CD8-positive, alpha-beta T cell (primary cell): ENCODE measurements at regions of chr7 and their contacts with region 1.

Region 1: DNA sequence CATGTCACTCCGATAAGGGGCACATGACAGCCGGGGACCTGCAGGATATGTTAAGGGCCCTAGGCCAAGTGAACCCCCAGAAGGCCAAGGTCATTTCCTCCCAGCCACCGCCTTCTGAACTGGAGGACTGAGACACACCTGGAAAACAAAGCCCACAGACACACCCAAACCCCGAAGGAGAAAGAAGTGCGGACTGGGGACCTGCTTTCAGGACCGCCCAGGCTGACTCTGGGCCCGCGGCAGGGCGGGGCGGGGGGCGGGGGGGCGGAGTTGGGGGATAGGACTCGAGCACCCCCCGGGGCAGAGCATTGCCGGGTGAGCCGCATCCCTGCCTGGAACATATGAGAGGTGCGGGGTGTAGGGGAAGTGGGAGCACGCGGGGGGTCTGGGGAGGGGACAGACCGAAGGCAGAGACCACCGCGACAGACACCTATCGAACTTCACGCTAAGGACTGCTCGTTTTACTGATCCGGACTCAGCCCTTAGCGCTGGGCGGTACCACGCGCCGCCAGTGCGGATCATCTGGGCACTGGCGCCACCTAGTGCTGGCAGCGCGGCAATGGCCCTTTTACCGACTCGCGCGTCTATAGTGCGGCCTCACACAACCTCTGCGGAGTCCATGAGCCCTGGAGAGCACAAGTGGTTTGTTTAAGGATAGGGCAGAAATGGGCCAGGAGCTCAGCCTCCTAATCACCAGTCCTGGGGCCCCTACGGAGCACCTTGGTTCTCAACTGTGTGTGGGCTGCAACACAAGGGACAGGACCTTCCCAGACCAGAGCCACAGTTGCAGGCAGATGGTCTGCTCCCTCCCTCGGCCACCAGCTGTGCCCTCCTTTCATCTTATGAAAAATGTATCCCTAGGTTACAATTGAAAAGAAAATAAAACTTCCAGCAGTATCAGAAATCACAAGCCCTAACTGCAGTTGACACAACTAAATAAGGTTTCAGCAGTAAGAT is 157.6 kb downstream of the HERPUD2 start:
- DNase-seq: peak; percentile 63 to 87 (median 79)
- ATAC-seq: peak; percentile 98
- H3K4me3 ChIP-seq: peak overlapping the region; percentile 35 to 36
- H3K4me3 Mint-ChIP-seq: peak overlapping the region; percentile 87
- H3K27ac ChIP-seq: no peak overlapping the region
- H3K27ac Mint-ChIP-seq: no peak overlapping the region
- H3K4me1 ChIP-seq: no peaks in the 10 kb centered on the region
- H3K4me1 Mint-ChIP-seq: peaks cover 2% of the 10 kb centered on the region
- H3K27me3 ChIP-seq: no peaks in the 10 kb centered on the region
- H3K27me3 Mint-ChIP-seq: peaks cover 12% of the 10 kb centered on the region
- CTCF ChIP-seq: peak; percentile 94

Region 2: GRCh38 chr7:34091323-34091917 is 1445.9 kb before region 1 on chr7:
- CTCF ChIA-PET with region 1: no interaction called
- POLR2A ChIA-PET with region 1: no interaction called
- intact Hi-C with region 1: loop called in 1 of 2 experiments (anchors 2 kb)
- DNase-seq: peak in 2 of 9 experiments; percentile 6 to 7
- ATAC-seq: no peak
- H3K4me3 ChIP-seq: no peak overlapping the region
- H3K4me3 Mint-ChIP-seq: no peak overlapping the region
- H3K27ac ChIP-seq: no peak overlapping the region
- H3K27ac Mint-ChIP-seq: no peak overlapping the region
- H3K4me1 ChIP-seq: no peaks in the 10 kb centered on the region
- H3K4me1 Mint-ChIP-seq: no peaks in the 10 kb centered on the region
- H3K27me3 ChIP-seq: no peaks in the 10 kb centered on the region
- H3K27me3 Mint-ChIP-seq: no peaks in the 10 kb centered on the region
- CTCF ChIP-seq: no peak

Region 3: GRCh38 chr7:34823640-34824258 is 713.6 kb before region 1 on chr7:
- CTCF ChIA-PET with region 1: interaction called, 8 read pairs
- POLR2A ChIA-PET with region 1: no interaction called
- intact Hi-C with region 1: loop called in 1 of 2 experiments (anchors 5 kb)
- DNase-seq: peak; percentile 15 to 67 (median 48)
- ATAC-seq: peak; percentile 56
- H3K4me3 ChIP-seq: no peak overlapping the region
- H3K4me3 Mint-ChIP-seq: no peak overlapping the region
- H3K27ac ChIP-seq: no peak overlapping the region
- H3K27ac Mint-ChIP-seq: no peak overlapping the region
- H3K4me1 ChIP-seq: no peaks in the 10 kb centered on the region
- H3K4me1 Mint-ChIP-seq: no peaks in the 10 kb centered on the region
- H3K27me3 ChIP-seq: no peaks in the 10 kb centered on the region
- H3K27me3 Mint-ChIP-seq: no peaks in the 10 kb centered on the region
- CTCF ChIP-seq: peak; percentile 84

Region 4: DNA sequence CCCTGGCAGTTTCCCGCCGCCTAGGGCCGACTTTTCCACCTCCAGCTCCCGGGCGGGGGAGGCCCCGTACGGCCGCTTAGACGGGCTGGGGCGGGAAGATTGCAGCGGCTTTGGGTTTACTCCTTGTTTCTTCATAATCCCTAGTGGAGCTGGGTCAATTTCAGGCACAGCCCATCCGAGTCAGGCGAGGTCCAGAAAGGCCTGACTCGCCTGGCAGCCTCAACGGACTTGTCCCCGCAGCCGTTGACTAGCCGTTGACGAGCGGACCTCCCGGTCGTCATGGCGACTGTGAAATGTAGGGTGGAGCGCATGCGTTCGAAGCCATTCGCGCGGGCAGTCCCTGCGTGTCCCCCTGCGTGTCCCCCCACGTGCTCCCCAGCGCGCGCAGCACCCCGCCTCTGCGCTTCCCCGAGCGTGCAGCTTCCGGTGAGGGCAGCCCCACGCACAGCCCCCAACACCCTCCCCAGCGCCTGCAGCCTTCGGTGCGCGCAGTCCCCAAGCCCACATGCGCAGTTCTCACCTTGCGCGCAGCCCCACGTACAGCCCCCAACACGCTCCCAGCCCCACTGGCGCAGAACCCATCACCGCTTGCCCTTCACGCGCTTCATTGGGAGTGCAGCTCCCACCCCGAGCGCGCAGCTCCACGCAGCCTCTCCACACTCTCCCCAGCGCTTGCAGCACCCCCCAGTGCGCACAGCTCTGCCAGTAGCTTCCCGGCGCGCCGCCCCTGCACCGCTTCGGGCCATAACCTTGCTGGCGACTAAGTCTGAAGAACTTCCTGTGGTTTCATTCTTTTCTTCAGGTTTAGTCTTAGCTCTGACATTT is 351.2 kb before region 1 on chr7:
- CTCF ChIA-PET with region 1: no interaction called
- POLR2A ChIA-PET with region 1: no interaction called
- intact Hi-C with region 1: loop called in 1 of 2 experiments (anchors 5 kb)
- DNase-seq: peak in 1 of 9 experiments; percentile 5
- ATAC-seq: no peak
- H3K4me3 ChIP-seq: no peak overlapping the region
- H3K4me3 Mint-ChIP-seq: peak overlapping the region; percentile 56
- H3K27ac ChIP-seq: no peak overlapping the region
- H3K27ac Mint-ChIP-seq: no peak overlapping the region
- H3K4me1 ChIP-seq: no peaks in the 10 kb centered on the region
- H3K4me1 Mint-ChIP-seq: peaks cover 8% of the 10 kb centered on the region
- H3K27me3 ChIP-seq: no peaks in the 10 kb centered on the region
- H3K27me3 Mint-ChIP-seq: peaks cover 15% of the 10 kb centered on the region
- CTCF ChIP-seq: no peak

Region 5: GRCh38 chr7:35906191-35906908 is 369.0 kb after region 1 on chr7:
- CTCF ChIA-PET with region 1: interaction called, 3 read pairs
- POLR2A ChIA-PET with region 1: no interaction called
- intact Hi-C with region 1: loop called (anchors 5 kb)
- DNase-seq: peak; percentile 44 to 86 (median 69)
- ATAC-seq: peak; percentile 94
- H3K4me3 ChIP-seq: no peak overlapping the region
- H3K4me3 Mint-ChIP-seq: no peak overlapping the region
- H3K27ac ChIP-seq: no peak overlapping the region
- H3K27ac Mint-ChIP-seq: no peak overlapping the region
- H3K4me1 ChIP-seq: no peaks in the 10 kb centered on the region
- H3K4me1 Mint-ChIP-seq: peaks cover 19% of the 10 kb centered on the region
- H3K27me3 ChIP-seq: no peaks in the 10 kb centered on the region
- H3K27me3 Mint-ChIP-seq: no peaks in the 10 kb centered on the region
- CTCF ChIP-seq: peak; percentile 95